A673 (cell line): ENCODE measurements at regions of chr4 and their contacts with region 1.

Region 1: DNA sequence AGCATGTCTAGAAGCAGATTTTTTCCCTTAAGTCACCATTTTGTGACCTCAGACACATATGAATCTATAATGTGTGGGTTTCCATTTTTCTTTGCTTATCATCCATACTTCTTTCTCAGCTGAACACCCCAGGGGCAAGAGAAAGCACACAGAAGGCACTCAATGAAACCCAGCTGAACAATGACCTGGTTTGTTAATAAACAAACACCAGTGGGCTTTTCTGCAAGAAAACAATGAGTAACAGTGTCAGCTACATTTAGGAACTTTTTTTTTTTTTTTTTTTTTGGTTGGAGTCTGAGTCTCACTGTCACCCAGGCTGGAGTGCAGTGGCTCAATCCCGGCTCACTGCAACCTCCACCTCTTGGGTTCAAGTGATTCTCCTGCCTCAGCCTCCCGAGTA is 40.7 kb upstream of the KLF3 start:
- DNase-seq: no peak
- H3K4me3 ChIP-seq: no peak overlapping the region
- H3K27ac ChIP-seq: no peak overlapping the region
- H3K4me1 ChIP-seq: peaks cover 9% of the 10 kb centered on the region
- H3K27me3 ChIP-seq: no peaks in the 10 kb centered on the region
- CTCF ChIP-seq: no peak

Region 2: DNA sequence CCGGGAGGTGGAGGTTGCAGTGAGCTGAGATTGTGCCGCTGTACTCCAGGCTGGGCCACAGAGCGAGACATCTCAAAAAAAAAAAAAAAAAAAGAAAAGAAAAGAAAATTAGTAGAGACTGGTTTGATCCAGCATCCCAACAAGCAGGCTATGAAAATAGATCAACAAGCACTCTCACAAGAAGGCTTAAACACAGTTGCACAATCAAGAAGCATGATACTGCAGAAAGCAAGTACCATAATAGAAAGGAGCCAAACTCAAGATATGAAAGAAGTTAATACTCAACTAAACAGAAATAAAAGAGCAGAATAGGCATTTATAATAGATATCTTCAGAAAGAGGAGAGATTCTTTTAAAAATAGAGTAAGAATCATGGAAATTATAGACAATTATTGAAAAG is 222.8 kb after region 1 on chr4:
- CTCF ChIA-PET with region 1: no interaction called
- POLR2A ChIA-PET with region 1: no interaction called
- intact Hi-C with region 1: no loop called
- DNase-seq: no peak
- H3K4me3 ChIP-seq: no peak overlapping the region
- H3K27ac ChIP-seq: no peak overlapping the region
- H3K4me1 ChIP-seq: no peaks in the 10 kb centered on the region
- H3K27me3 ChIP-seq: no peaks in the 10 kb centered on the region
- CTCF ChIP-seq: no peak

Region 3: DNA sequence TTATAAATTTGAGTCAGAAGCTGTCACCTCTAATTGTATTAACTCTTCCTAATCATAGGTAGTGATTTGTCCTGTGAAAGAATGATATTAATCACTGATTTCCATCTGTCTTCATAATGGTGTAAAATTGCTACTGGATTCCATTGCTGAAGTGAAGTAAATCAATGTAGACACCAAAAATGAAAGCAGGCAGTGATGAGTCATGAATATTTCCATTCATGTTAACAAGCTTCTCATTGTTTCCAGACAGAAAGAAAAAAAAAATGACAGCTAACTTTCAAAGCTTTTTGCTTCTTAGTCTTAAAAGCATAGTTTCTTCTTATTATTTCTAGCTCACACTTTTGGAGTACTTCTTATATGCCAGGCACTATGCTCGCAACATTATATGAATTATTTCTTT is 265.9 kb after region 1 on chr4:
- CTCF ChIA-PET with region 1: no interaction called
- POLR2A ChIA-PET with region 1: interaction called, 12 read pairs
- intact Hi-C with region 1: no loop called
- DNase-seq: peak; percentile 56
- H3K4me3 ChIP-seq: no peak overlapping the region
- H3K27ac ChIP-seq: no peak overlapping the region
- H3K4me1 ChIP-seq: peaks cover 8% of the 10 kb centered on the region
- H3K27me3 ChIP-seq: no peaks in the 10 kb centered on the region
- CTCF ChIP-seq: no peak